ENCODE measurements at regions of chr20 and their contacts with region 1.

Region 1: GRCh38 chr20:54680872-54681619 is 205.7 kb downstream of the DOK5 start:
- DNase-seq: peak; percentile 18
- H3K4me3 Mint-ChIP-seq: no peak overlapping the region
- H3K27ac Mint-ChIP-seq: no peak overlapping the region
- H3K4me1 Mint-ChIP-seq: no peaks in the 10 kb centered on the region
- H3K27me3 Mint-ChIP-seq: peaks cover 5% of the 10 kb centered on the region

Region 2: DNA sequence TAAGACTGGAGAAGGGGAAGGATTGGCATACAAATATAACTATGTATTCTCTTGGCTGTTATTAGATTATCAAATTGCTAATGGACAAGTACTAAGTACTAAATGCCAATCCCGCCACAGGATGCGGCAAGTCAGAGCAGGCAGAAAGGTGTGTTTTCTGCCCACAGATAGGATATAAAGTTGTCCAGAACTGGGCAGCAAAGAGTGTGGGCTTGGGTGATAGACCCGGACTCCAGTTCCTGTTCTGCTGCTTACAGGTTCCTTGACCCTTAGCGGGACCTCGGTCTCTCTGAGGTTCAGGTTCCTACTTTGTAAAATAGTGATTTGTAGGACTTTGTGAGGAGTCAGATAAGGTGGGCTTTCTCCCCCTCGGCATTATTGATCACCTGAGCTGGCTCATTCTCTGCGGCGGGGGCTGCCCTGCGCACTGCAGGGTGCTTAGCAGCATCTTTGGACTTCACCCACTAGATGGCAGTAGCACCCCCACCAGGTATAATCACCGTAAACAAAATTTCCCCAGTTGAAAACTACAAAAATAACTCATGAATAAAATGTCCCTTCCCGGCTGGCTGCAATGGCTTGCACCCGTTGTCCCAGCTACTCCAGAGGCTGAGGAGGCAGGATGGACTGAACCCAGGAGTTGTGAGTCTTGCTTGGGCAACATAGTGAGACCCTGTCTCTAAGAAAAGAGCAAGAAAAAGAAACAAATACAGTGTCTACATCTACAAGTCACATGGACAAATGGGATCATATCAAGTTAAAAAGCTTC is 12.6 kb before region 1 on chr20:
- CTCF ChIA-PET with region 1: interaction called, 10 read pairs
- POLR2A ChIA-PET with region 1: no interaction called
- DNase-seq: peak; percentile 26
- H3K4me3 Mint-ChIP-seq: no peak overlapping the region
- H3K27ac Mint-ChIP-seq: no peak overlapping the region
- H3K4me1 Mint-ChIP-seq: no peaks in the 10 kb centered on the region
- H3K27me3 Mint-ChIP-seq: no peaks in the 10 kb centered on the region